ENCODE measurements at regions of chr1 and their contacts with region 1.

Region 1: DNA sequence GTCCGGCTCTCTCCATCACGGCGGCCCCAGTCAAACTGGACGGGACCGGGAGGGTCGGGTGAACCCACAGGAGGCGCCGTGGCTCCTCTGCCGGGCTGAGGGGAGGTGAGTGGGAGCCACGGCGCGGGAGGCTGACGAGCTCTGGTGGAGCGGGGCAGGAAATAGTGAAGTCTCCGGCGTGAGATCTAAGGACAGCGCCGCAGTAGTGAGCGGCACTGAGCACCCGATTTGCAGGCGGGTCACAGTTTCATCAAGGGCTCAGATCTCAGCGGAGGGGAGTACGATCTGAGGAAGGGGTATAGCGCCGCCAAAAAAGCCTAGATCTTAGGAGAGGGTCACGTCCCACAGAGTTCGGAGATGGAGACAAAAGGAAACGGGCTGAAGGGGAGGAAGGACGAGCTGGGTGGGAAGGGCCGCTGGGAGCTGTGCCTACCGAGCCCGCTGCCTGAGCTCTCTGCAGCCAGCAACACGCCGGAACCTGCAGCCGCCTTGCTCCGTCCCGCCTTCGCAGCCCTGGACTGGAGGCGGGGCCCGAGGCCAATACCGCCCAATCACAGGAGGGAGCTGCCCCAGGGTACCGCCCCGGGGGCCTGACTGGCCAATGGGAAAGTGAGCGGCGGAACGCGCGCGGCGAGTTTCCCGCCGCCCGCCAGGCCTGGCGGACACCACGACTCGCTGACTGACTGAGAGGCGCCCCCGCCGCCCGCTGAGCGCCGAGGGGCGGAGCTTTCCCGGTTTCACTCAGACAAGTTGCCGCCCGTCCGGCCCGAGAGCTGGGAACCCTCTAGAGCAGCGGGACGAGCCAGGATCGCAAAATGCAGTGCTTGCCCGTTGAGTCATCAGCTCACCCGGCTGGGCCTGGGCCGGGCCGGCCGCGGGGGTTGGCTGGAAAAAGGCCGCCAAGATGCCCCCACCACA is 1.9 kb downstream of the SFN start:
- DNase-seq: peak; percentile 97
- ATAC-seq: peak; percentile 95
- H3K4me3 ChIP-seq: peak overlapping the region; percentile 80 to 99 (median 89)
- H3K4me3 Mint-ChIP-seq: peak overlapping the region; percentile 94
- H3K27ac ChIP-seq: peak overlapping the region; percentile 86 to 90
- H3K27ac Mint-ChIP-seq: peak overlapping the region; percentile 89
- H3K4me1 ChIP-seq: peaks cover 9 to 25% of the 10 kb centered on the region in 2 donors
- H3K4me1 Mint-ChIP-seq: peaks cover 20% of the 10 kb centered on the region
- H3K27me3 ChIP-seq: no peaks in the 10 kb centered on the region
- H3K27me3 Mint-ChIP-seq: no peaks in the 10 kb centered on the region
- CTCF ChIP-seq: no peak

Region 2: GRCh38 chr1:26574719-26575251 is 290.1 kb before region 1 on chr1:
- CTCF ChIA-PET with region 1: no interaction called
- POLR2A ChIA-PET with region 1: no interaction called
- intact Hi-C with region 1: no loop called
- DNase-seq: no peak
- ATAC-seq: no peak
- H3K4me3 ChIP-seq: no peak overlapping the region
- H3K4me3 Mint-ChIP-seq: no peak overlapping the region
- H3K27ac ChIP-seq: no peak overlapping the region
- H3K27ac Mint-ChIP-seq: peak overlapping the region; percentile 26
- H3K4me1 ChIP-seq: no peaks in the 10 kb centered on the region
- H3K4me1 Mint-ChIP-seq: no peaks in the 10 kb centered on the region
- H3K27me3 ChIP-seq: no peaks in the 10 kb centered on the region
- H3K27me3 Mint-ChIP-seq: no peaks in the 10 kb centered on the region
- CTCF ChIP-seq: no peak

Region 3: DNA sequence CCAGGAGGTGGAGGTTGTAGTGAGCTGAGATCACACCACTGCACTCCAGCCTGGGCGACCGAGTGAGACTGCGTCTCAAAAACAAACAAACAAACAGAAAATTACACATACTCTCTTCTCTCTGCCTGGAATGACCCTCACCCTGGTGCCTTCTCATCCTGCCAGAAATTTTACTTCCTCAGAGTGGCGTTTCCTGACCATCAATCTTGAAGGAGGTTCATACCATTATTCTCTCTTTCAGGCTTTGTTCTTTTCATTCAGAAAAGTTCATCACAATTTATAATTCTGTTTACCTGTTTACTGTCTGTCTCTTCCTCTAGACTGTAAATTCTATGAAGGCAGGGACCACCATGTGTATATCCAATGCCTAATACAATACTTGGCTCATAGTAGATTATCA is 256.0 kb before region 1 on chr1:
- CTCF ChIA-PET with region 1: no interaction called
- POLR2A ChIA-PET with region 1: no interaction called
- intact Hi-C with region 1: no loop called
- DNase-seq: no peak
- ATAC-seq: no peak
- H3K4me3 ChIP-seq: no peak overlapping the region
- H3K4me3 Mint-ChIP-seq: no peak overlapping the region
- H3K27ac ChIP-seq: no peak overlapping the region
- H3K27ac Mint-ChIP-seq: no peak overlapping the region
- H3K4me1 ChIP-seq: no peaks in the 10 kb centered on the region
- H3K4me1 Mint-ChIP-seq: no peaks in the 10 kb centered on the region
- H3K27me3 ChIP-seq: no peaks in the 10 kb centered on the region
- H3K27me3 Mint-ChIP-seq: peaks cover 9% of the 10 kb centered on the region
- CTCF ChIP-seq: no peak

Region 4: DNA sequence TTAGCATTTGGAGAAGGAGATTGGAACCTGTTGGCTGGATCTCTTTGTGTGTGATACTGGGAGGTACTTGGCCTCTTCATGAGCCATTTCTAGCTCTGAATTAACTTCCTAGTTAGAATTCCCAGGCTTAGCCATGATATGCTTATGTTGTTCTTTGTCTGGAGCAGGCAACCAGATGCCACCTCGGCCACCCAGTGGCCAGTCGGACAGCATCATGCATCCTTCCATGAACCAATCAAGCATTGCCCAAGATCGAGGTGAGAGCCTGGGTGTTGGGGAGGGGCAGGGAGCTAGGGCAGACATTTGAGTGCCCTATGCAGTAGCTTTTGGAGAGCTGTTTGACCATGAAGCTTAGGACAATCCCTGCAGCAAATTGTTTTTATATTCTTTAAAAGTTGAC is 103.7 kb before region 1 on chr1:
- CTCF ChIA-PET with region 1: no interaction called
- POLR2A ChIA-PET with region 1: no interaction called
- intact Hi-C with region 1: no loop called
- DNase-seq: no peak
- ATAC-seq: no peak
- H3K4me3 ChIP-seq: no peak overlapping the region
- H3K4me3 Mint-ChIP-seq: no peak overlapping the region
- H3K27ac ChIP-seq: no peak overlapping the region
- H3K27ac Mint-ChIP-seq: no peak overlapping the region
- H3K4me1 ChIP-seq: no peaks in the 10 kb centered on the region
- H3K4me1 Mint-ChIP-seq: peaks cover 5% of the 10 kb centered on the region
- H3K27me3 ChIP-seq: no peaks in the 10 kb centered on the region
- H3K27me3 Mint-ChIP-seq: no peaks in the 10 kb centered on the region
- CTCF ChIP-seq: no peak

Region 5: DNA sequence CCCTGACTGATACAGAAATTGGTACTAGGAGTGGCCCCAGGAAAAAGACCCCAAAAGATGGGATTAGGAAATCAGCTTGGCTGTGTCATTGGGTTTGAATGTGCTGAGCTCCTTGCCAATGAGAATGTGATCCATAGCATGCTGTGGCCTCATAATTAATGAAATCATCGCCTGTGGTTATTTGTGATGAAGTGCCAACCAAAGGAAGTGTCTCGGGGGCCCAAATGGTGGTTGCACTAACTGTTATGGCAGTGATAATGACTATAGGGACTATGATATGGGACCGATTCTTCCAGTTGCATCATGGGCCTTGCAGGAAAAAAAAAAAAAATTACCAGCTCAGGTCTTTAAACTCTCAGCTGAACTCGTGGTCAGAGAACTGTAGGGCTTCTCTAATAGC is 53.8 kb before region 1 on chr1:
- CTCF ChIA-PET with region 1: interaction called, 19 read pairs
- POLR2A ChIA-PET with region 1: interaction called, 3 read pairs
- intact Hi-C with region 1: loop called (anchors 1 kb)
- DNase-seq: no peak
- ATAC-seq: no peak
- H3K4me3 ChIP-seq: no peak overlapping the region
- H3K4me3 Mint-ChIP-seq: no peak overlapping the region
- H3K27ac ChIP-seq: no peak overlapping the region
- H3K27ac Mint-ChIP-seq: no peak overlapping the region
- H3K4me1 ChIP-seq: no peaks in the 10 kb centered on the region
- H3K4me1 Mint-ChIP-seq: peaks cover 3% of the 10 kb centered on the region
- H3K27me3 ChIP-seq: peaks cover 0 to 6% (median 0%) of the 10 kb centered on the region in 4 experiments
- H3K27me3 Mint-ChIP-seq: no peaks in the 10 kb centered on the region
- CTCF ChIP-seq: no peak

Region 6: DNA sequence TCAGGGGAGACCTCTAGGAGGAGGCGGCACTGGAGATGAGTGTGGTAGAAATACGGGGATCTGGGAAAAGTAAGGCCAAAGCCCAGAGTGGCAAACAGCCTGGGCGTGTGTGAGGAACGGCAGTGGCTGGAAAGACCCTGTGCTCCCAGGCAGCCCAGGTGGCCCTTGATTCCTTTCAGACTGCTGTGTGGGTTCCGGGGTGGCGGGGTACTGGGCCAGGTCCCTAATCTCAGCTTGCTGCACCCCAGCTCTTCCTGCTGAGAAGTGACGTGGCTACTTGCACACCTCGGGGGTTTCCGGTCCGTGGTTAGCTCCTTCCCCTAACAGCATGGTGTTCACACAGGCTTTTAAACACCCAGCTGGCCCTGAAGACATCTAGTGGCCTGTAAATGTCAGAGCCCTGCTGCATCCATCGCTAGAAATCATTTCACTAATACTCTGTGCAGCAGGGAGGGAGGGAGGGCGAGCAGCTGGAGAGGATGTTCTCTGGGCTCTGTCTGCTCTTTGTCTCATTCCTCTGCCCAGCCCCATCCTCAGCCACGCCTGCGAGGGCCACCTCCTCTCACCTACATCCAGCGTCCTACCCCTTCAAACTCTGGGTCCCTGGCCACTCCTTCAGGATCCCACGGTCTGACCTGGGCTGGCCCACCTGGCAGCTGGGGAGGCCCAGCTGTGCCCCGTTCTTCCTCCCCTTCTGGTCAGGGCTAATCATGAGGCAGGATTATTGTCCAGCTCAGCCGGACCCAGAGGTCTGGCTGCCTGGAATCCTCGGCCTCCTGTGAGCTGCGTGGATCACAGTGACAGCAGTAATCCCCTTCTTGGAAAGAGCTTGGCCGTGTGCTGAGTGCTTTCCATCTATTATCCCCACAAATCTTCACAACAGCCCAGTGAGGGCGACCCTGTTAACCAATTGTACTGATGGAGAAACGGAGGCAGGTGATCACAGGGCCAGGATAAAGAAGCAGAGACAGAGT is 31.1 kb before region 1 on chr1:
- CTCF ChIA-PET with region 1: interaction called, 11 read pairs
- POLR2A ChIA-PET with region 1: interaction called, 7 read pairs
- intact Hi-C with region 1: loop called (anchors 2 kb)
- DNase-seq: peak; percentile 95
- ATAC-seq: peak; percentile 96
- H3K4me3 ChIP-seq: peak overlapping the region in 4 of 5 experiments; percentile 3 to 54 (median 30)
- H3K4me3 Mint-ChIP-seq: peak overlapping the region; percentile 78
- H3K27ac ChIP-seq: peak overlapping the region; percentile 83 to 98
- H3K27ac Mint-ChIP-seq: peak overlapping the region; percentile 92
- H3K4me1 ChIP-seq: peaks cover 30 to 48% of the 10 kb centered on the region in 2 donors
- H3K4me1 Mint-ChIP-seq: peaks cover 56% of the 10 kb centered on the region
- H3K27me3 ChIP-seq: no peaks in the 10 kb centered on the region
- H3K27me3 Mint-ChIP-seq: no peaks in the 10 kb centered on the region
- CTCF ChIP-seq: peak; percentile 58

Region 7: DNA sequence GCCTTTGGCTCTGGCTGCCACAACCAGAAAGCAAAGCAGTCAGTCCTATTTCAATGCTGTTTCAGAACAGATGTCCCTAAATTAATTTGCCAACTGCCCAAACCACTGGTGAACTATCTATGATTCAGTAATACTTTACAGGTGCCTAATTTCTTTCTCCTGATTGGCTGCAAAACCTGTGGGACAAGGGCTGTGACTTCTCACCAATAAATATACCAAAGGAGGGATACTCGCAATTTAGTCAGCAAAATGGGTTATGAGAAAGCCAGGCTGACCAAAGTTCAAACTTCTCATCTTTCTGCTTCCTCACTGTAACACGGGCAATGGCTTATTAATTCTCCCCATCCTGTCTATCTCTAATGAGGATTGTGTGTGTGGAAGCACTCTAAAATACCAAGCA is 12.5 kb after region 1 on chr1:
- CTCF ChIA-PET with region 1: interaction called, 23 read pairs
- POLR2A ChIA-PET with region 1: interaction called, 6 read pairs
- intact Hi-C with region 1: loop called (anchors 1 kb)
- DNase-seq: no peak
- ATAC-seq: no peak
- H3K4me3 ChIP-seq: no peak overlapping the region
- H3K4me3 Mint-ChIP-seq: no peak overlapping the region
- H3K27ac ChIP-seq: no peak overlapping the region
- H3K27ac Mint-ChIP-seq: no peak overlapping the region
- H3K4me1 ChIP-seq: peaks cover 0 to 3% of the 10 kb centered on the region in 2 donors
- H3K4me1 Mint-ChIP-seq: peaks cover 3% of the 10 kb centered on the region
- H3K27me3 ChIP-seq: no peaks in the 10 kb centered on the region
- H3K27me3 Mint-ChIP-seq: no peaks in the 10 kb centered on the region
- CTCF ChIP-seq: no peak

Region 8: GRCh38 chr1:26889551-26890466 is 24.9 kb after region 1 on chr1 and contains the start of gene GPN2:
- CTCF ChIA-PET with region 1: interaction called, 8 read pairs
- POLR2A ChIA-PET with region 1: interaction called, 26 read pairs
- intact Hi-C with region 1: loop called (anchors 1 kb)
- DNase-seq: peak; percentile 88
- ATAC-seq: peak; percentile 92
- H3K4me3 ChIP-seq: peak within 1 kb of the TSS; percentile 73 to 94 (median 89)
- H3K4me3 Mint-ChIP-seq: peak within 1 kb of the TSS; percentile 96
- H3K27ac ChIP-seq: peak within 1 kb of the TSS; percentile 61 to 94
- H3K27ac Mint-ChIP-seq: peak within 1 kb of the TSS; percentile 95
- H3K4me1 ChIP-seq: peaks cover 15 to 21% of the 10 kb centered on the region in 2 donors
- H3K4me1 Mint-ChIP-seq: peaks cover 35% of the 10 kb centered on the region
- H3K27me3 ChIP-seq: no peaks in the 10 kb centered on the region
- H3K27me3 Mint-ChIP-seq: no peaks in the 10 kb centered on the region
- CTCF ChIP-seq: no peak
- total RNA-seq, gene GPN2: 40.7 and 43.5 TPM in 2 replicates

Region 9: DNA sequence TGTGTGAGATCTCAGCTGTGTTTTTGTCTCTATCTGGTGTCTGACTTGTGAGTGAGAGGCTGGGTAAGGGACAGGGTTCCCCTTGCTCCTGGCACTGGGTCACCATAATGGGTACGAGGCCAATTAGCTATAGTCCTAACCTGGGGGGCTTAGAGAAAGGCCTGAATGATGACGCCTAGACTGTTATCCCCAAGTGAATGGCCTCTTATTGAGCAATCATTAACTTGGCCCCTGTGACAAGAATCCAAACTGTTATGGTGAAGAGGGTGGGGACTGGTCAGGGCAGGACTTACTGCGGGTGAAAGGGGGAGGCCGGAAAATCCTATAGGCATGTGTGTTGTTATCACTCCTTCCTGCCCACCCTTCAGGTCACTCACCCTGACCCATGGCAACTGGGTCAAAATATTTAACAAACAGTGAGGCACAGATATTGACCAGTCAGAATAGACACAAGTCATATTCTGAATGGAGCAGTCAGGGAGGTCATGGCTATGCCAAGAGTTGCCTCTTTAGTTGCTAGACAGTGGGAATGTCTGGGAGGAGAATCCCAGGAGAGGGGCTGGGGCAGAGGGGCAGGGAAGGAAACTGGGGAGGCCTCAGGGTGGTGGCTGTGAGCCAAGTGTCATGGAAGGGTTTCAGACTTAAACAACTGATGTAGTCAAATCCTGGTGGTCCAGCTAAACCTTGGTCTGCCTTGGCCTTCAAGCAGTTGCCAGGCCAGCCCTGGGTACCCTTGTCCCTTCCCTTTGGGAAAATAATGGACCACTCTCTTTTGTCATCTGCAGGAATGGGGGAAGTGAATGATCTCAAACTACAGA is 45.7 kb after region 1 on chr1:
- CTCF ChIA-PET with region 1: no interaction called
- POLR2A ChIA-PET with region 1: no interaction called
- intact Hi-C with region 1: no loop called
- DNase-seq: no peak
- ATAC-seq: no peak
- H3K4me3 ChIP-seq: no peak overlapping the region
- H3K4me3 Mint-ChIP-seq: no peak overlapping the region
- H3K27ac ChIP-seq: no peak overlapping the region
- H3K27ac Mint-ChIP-seq: no peak overlapping the region
- H3K4me1 ChIP-seq: no peaks in the 10 kb centered on the region
- H3K4me1 Mint-ChIP-seq: no peaks in the 10 kb centered on the region
- H3K27me3 ChIP-seq: no peaks in the 10 kb centered on the region
- H3K27me3 Mint-ChIP-seq: peaks cover 8% of the 10 kb centered on the region
- CTCF ChIP-seq: no peak

Region 10: DNA sequence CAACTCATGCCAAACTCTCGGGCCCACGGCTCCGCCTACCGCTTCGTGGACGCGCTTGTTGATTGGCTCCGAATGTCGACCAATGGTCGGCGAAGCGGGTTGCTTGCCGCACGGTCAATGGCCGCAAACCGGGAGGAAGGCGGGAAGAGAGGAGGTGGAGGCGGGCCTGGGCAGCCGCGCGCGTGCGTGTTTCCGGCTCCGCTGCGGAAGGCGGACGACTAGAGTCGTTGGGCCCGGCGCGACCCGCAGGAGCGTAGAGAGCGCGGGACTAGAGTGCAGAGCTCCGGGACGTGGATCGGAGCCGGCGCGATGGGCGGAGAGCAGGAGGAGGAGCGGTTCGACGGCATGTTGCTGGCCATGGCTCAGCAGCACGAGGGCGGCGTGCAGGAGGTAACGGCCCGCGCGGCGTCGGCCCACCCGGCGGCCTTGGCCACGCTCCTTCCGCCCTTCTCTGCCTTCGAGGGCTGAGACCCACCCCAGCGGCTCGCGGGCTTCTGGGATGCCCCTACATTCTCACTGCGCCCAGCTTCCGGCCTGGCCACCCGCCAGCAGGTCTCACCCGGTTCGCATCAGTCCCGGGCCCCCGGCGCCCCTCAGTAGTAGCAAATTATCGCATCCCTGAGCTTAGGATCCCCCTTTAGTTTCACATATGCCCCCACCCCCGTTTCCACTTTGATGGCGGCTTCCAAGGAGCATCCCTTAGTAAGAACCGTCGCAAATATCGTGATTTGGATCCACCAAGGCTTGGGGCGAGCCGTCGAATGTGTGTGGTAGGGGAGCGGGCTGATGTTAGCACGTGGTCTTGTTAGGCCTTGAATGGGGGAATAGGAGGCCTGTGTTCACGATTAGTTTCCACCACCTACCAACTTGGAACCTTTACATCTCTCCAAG is 56.9 kb after region 1 on chr1 and contains the start of gene NUDC:
- CTCF ChIA-PET with region 1: no interaction called
- POLR2A ChIA-PET with region 1: no interaction called
- intact Hi-C with region 1: loop called (anchors 1 kb)
- DNase-seq: peak; percentile 96
- ATAC-seq: peak; percentile 96
- H3K4me3 ChIP-seq: peak within 1 kb of the TSS; percentile 61 to 88 (median 80)
- H3K4me3 Mint-ChIP-seq: peak within 1 kb of the TSS; percentile 93
- H3K27ac ChIP-seq: peak within 1 kb of the TSS; percentile 68 to 93
- H3K27ac Mint-ChIP-seq: peak within 1 kb of the TSS; percentile 93
- H3K4me1 ChIP-seq: peaks cover 17 to 20% of the 10 kb centered on the region in 2 donors
- H3K4me1 Mint-ChIP-seq: peaks cover 33% of the 10 kb centered on the region
- H3K27me3 ChIP-seq: no peaks in the 10 kb centered on the region
- H3K27me3 Mint-ChIP-seq: no peaks in the 10 kb centered on the region
- CTCF ChIP-seq: no peak
- total RNA-seq, gene NUDC: 45.3 and 50.1 TPM in 2 replicates